GM13976 (cell line): ENCODE measurements at regions of chr1 and their contacts with region 1.

Region 1: GRCh38 chr1:178749581-178750166 is 24.6 kb downstream of the RALGPS2 start:
- DNase-seq: no peak
- CTCF ChIP-seq: no peak

Region 2: DNA sequence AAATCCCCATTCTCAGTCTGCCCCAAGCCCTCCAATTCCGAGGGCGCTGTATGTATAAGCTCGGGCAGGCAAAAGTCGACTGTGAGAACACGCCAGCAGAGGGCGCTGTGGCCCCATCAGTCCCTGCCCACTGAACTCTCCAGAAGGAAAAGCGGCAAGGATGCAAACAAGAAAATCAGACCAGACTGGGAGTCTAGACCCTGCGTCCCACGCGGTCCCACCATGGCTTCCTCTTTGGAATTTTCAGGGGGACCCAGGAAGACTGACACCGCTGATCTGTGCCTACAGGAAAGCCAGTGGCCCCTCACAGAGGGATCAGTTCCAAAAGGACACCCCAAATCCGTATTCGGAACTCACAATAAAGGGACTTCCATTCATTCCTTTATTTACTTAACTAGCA is 217.3 kb before region 1 on chr1:
- in situ Hi-C with region 1: loop called (anchors 10 kb)
- DNase-seq: peak; percentile 87
- CTCF ChIP-seq: peak; percentile 90

Region 3: GRCh38 chr1:178629252-178630154 is 120.2 kb before region 1 on chr1:
- in situ Hi-C with region 1: no loop called
- DNase-seq: no peak
- CTCF ChIP-seq: no peak

Region 4: DNA sequence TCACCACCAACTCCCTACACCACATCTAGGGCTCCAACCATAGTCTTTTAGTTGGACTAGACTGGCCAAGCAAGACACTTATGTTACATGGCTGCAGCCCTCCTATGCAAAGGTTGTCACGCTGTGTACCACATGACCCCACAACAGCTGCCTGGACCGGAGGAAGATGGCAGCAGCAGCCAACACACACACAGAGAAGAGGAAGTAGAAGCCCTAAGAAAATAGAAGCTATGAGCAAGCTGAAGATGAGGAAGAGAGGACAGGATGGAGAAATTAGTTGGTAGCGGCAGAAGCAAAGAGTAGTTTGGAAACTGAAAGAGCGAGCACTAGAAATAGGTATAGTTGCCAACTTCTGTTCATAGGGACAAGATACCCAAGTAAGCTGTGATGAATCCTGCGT is 85.4 kb before region 1 on chr1:
- in situ Hi-C with region 1: no loop called
- DNase-seq: no peak
- CTCF ChIP-seq: no peak

Region 5: DNA sequence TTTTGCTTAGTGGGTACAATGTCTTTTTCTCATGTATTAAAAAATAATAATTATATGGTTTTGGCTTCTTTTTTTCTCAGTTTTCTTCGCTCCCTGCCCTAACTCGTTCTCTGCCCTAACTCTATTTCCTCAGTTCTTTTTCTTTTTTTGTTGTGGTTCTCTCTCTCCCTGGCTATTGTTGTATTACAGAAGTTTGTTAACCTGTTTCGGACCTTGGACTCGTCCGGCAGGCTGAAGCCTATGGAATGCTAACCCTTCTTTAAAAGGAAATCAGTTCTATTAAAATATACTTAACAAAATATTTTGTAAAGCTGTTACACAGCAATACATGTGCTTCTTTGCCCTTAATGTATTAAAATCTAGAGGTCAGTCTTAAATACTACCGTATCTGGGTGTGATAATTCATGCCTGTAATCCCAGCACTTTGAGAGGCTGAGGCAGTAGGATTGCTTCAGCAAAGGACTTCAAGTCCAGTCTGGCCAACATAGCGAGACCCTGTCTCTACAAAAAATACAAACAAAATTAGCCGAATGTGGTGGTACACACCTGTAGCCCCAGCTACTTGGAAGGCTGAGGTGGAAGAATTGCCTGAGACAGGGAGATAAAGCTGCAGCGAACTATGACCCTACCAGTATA is 57.1 kb after region 1 on chr1:
- in situ Hi-C with region 1: no loop called
- DNase-seq: no peak
- CTCF ChIP-seq: no peak

Region 6: DNA sequence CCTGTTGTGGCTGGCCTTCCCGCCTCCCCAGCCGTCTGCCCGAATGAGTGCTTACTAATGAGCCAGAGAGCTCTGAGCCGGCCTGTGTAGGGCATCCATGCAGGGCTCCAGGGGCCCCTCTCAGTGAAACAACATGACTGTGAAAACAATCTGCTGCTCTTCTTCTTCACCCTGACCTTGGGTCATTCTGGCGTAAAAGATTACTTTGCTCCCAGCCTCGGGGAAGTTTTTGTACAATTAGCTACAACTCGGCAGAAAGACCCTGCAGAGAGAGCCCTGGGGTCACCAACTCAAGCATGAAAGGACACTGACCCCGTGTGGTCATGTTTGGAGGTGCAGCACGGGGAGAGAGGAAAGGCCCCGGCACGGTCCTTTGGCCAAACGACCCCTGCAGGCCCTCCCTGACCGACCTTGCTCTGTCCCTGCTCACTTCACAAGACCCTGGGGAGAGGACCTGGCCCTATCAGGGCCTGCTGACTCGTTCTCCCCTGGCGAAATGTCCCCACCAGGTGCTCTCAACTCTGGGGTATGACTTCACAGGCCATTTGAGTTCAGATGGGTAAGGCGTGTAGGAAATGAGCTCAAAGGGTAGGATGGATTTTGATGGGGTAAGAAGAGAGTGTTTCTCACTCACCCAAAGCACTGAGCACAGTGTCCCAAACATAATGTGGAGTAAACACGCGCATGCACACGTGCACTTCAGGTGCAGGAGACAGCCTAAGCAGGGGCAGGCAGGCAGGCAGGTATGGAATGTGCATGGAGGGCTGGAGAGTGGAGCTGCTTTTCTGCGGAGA is 253.1 kb after region 1 on chr1:
- in situ Hi-C with region 1: no loop called
- DNase-seq: peak; percentile 63
- CTCF ChIP-seq: peak; percentile 76